AG04449 (cell line): ENCODE measurements at regions of chr6 and their contacts with region 1.

Region 1: GRCh38 chr6:52399511-52400312 is 20.4 kb upstream of the EFHC1 start:
- DNase-seq: no peak
- H3K4me3 ChIP-seq: no peak overlapping the region
- CTCF ChIP-seq: peak; percentile 76

Region 2: DNA sequence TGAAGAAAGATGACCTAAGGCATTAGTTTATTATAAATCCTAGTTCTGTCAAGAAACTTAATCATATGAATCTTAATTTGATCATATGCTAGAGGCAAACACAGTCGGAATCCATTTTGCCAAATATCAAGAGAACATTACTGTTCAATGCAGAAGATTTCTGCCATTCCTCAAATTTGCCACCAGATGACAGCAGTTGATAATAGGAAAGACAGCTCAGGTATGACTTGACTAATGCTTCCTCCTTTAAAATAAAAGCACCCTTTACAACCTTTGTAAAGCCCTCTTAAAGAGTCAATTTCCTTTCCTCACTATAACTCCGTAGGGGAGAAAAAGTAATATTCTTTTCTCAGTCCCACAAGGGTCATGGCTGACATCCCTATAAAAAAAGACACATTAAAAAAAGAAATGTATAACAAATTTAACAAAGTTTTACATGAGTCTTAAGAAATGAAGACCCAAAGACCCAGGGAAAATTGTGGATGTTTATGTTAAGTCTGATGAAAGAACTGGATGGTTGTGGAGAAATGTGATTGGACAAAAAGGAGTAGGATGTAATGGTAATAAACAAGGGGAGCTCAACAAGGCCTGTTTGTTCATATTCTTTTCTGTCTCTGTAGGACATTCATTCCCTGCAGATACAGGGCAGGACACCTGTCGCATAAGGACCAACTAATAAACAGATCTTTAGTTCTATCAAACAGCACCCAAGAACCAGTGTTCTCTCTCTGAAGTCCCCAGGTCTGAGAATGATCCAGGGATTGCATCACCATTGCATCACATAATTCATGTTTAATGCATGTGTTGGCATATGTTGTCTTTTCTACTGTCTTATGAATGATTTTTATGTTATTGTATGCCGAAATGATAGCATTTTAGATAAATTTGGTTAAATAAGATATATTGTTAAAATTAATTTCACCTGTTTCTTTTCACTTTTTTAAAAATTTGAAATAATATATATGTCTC is 236.5 kb before region 1 on chr6:
- CTCF ChIA-PET with region 1: interaction called, 27 read pairs
- POLR2A ChIA-PET with region 1: no interaction called
- DNase-seq: no peak
- H3K4me3 ChIP-seq: no peak overlapping the region
- CTCF ChIP-seq: peak; percentile 45

Region 3: GRCh38 chr6:52361945-52362442 is 37.7 kb before region 1 on chr6 and contains the start of gene PAQR8:
- CTCF ChIA-PET with region 1: interaction called, 10 read pairs
- POLR2A ChIA-PET with region 1: no interaction called
- DNase-seq: no peak
- H3K4me3 ChIP-seq: peak within 1 kb of the TSS; percentile 78
- CTCF ChIP-seq: no peak